Activated naive CD4-positive, alpha-beta T cell treated with anti-CD3 and anti-CD28 coated beads for 36 hours (primary cell): ENCODE measurements at regions of chr22 and their contacts with region 1.

Region 1: GRCh38 chr22:23144932-23145873 is at the start of gene RAB36:
- DNase-seq: peak; percentile 82
- H3K4me3 Mint-ChIP-seq: peak within 1 kb of the TSS; percentile 63
- H3K27ac Mint-ChIP-seq: no peak within 1 kb of the TSS
- H3K4me1 Mint-ChIP-seq: peaks cover 44% of the 10 kb centered on the region
- H3K27me3 Mint-ChIP-seq: no peaks in the 10 kb centered on the region
- total RNA-seq, gene RAB36: not detected

Region 2: DNA sequence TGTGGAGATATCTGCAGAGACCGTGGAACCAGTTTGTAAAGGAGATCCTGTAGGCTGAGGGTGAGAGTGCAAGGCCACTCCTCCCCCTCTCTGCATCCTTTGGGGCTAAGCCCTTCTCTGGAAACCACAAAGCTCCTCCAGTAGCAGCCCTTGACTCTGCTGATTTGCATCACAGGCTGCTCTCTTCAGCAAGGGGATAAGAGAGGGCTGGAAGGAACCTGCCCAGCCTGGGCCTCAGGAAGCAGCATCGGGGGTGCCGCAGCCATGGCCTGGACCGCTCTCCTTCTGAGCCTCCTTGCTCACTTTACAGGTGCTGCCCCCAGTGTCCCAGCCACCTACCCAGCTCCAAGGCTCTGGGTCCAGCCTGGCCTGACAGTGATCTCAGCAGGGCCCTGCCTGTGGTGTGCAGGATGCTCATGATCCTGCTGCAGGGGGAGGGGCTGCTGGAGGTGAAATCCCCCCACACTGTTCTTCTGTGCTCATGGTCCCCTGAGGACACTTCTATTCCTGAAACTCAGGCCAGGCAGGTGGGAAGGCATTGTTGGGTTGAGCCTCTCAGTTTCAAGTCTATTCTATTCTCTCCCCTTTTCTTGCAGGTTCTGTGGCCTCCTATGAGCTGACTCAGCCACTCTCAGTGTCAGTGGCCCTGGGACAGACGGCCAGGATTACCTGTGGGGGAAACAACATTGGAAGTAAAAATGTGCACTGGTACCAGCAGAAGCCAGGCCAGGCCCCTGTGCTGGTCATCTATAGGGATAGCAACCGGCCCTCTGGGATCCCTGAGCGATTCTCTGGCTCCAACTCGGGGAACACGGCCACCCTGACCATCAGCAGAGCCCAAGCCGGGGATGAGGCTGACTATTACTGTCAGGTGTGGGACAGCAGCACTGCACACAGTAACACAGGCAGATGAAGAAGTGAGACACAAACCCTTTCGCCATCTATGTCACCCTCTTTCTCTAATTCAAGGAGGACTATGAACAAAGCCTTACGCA is 326.0 kb before region 1 on chr22:
- CTCF ChIA-PET with region 1: no interaction called
- intact Hi-C with region 1: loop called (anchors 5 kb)
- DNase-seq: peak; percentile 37
- H3K4me3 Mint-ChIP-seq: no peak overlapping the region
- H3K27ac Mint-ChIP-seq: no peak overlapping the region
- H3K4me1 Mint-ChIP-seq: peaks cover 90% of the 10 kb centered on the region
- H3K27me3 Mint-ChIP-seq: no peaks in the 10 kb centered on the region

Region 3: GRCh38 chr22:23012081-23012622 is 133.1 kb before region 1 on chr22:
- CTCF ChIA-PET with region 1: no interaction called
- intact Hi-C with region 1: loop called (anchors 2 kb)
- DNase-seq: peak; percentile 69
- H3K4me3 Mint-ChIP-seq: no peak overlapping the region
- H3K27ac Mint-ChIP-seq: peak overlapping the region; percentile 48
- H3K4me1 Mint-ChIP-seq: peaks cover 26% of the 10 kb centered on the region
- H3K27me3 Mint-ChIP-seq: peaks cover 43% of the 10 kb centered on the region

Region 4: GRCh38 chr22:23066200-23067022 is 78.8 kb before region 1 on chr22:
- CTCF ChIA-PET with region 1: no interaction called
- intact Hi-C with region 1: no loop called
- DNase-seq: no peak
- H3K4me3 Mint-ChIP-seq: no peak overlapping the region
- H3K27ac Mint-ChIP-seq: no peak overlapping the region
- H3K4me1 Mint-ChIP-seq: peaks cover 3% of the 10 kb centered on the region
- H3K27me3 Mint-ChIP-seq: peaks cover under 1% of the 10 kb centered on the region

Region 5: DNA sequence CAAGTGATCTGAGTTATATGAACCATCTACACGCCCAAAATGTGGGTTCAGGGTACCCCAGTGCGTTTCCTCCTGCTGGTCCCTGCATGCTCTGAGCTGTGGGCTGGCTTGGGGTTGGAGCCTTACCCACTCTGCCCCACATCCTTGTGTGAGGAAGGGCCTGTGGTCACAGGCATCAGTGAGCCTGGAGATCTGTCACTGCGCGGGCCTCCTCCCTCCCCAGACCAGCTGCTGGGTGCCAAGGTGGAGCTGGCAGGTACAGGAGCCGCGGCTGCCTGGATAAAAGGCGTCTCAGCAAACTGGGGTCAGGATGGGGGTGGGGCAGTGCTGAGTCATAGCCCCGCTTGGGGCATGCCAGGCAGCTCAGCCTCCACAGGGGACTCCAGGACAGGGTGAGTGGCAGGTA is 57.0 kb before region 1 on chr22:
- CTCF ChIA-PET with region 1: no interaction called
- intact Hi-C with region 1: no loop called
- DNase-seq: peak; percentile 31
- H3K4me3 Mint-ChIP-seq: no peak overlapping the region
- H3K27ac Mint-ChIP-seq: no peak overlapping the region
- H3K4me1 Mint-ChIP-seq: no peaks in the 10 kb centered on the region
- H3K27me3 Mint-ChIP-seq: peaks cover 2% of the 10 kb centered on the region

Region 6: GRCh38 chr22:23119494-23120414 is 25.4 kb before region 1 on chr22:
- CTCF ChIA-PET with region 1: no interaction called
- intact Hi-C with region 1: loop called (anchors 2 kb)
- DNase-seq: peak; percentile 84
- H3K4me3 Mint-ChIP-seq: peak overlapping the region; percentile 71
- H3K27ac Mint-ChIP-seq: peak overlapping the region; percentile 86
- H3K4me1 Mint-ChIP-seq: peaks cover 14% of the 10 kb centered on the region
- H3K27me3 Mint-ChIP-seq: no peaks in the 10 kb centered on the region